Common myeloid progenitor, CD34-positive (primary cell): ENCODE measurements at regions of chr11 and their contacts with region 1.

Region 1: DNA sequence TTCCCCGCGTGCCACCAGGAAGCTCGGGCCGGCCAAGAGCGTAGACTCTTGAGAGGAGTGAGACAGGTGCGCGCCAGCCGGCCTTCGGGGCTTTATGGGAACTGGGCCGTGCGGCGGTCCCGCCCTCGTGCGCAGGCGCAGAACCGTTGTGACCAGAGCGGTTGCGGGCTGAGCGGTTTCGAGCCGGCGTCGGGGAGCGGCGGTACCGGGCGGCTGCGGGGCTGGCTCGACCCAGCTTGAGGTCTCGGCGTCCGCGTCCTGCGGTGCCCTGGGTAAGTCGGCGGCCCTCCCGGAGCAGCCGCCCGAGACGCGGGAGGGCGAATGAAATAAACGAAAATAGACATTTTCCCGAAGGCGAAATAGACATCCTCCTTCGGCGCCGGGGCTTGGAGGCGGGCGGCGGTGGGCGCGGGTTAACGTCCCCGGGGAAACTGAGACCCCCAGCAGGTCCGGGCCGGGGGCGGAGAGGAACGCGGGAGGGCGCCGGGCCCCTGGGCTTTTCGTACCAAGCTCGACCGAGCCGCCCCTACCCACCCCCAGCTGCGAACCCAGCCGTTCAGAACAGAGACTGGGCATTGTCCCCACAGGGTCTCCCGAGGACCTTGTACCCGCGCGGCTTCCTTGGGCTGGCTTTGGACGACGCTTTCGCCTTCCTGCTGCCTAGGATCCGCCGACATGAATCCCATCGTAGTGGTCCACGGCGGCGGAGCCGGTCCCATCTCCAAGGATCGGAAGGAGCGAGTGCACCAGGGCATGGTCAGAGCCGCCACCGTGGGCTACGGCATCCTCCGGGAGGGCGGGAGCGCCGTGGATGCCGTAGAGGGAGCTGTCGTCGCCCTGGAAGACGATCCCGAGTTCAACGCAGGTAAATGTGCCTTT is at the start of gene ASRGL1:
- DNase-seq: peak; percentile 59 to 72 (median 71)
- H3K4me3 ChIP-seq: peak within 1 kb of the TSS; percentile 61 to 85 (median 77)
- H3K27ac ChIP-seq: no peak within 1 kb of the TSS
- H3K4me1 ChIP-seq: peaks cover 3 to 17% (median 13%) of the 10 kb centered on the region in 4 experiments
- H3K27me3 ChIP-seq: peaks cover 0 to 5% (median 0%) of the 10 kb centered on the region in 5 experiments

Region 2: GRCh38 chr11:62256281-62256680 is 81.3 kb before region 1 on chr11:
- CTCF ChIA-PET with region 1: no interaction called
- POLR2A ChIA-PET with region 1: no interaction called
- DNase-seq: no peak
- H3K4me3 ChIP-seq: no peak overlapping the region
- H3K27ac ChIP-seq: no peak overlapping the region
- H3K4me1 ChIP-seq: no peaks in the 10 kb centered on the region
- H3K27me3 ChIP-seq: peaks cover 0 to 3% (median 0%) of the 10 kb centered on the region in 5 experiments

Region 3: DNA sequence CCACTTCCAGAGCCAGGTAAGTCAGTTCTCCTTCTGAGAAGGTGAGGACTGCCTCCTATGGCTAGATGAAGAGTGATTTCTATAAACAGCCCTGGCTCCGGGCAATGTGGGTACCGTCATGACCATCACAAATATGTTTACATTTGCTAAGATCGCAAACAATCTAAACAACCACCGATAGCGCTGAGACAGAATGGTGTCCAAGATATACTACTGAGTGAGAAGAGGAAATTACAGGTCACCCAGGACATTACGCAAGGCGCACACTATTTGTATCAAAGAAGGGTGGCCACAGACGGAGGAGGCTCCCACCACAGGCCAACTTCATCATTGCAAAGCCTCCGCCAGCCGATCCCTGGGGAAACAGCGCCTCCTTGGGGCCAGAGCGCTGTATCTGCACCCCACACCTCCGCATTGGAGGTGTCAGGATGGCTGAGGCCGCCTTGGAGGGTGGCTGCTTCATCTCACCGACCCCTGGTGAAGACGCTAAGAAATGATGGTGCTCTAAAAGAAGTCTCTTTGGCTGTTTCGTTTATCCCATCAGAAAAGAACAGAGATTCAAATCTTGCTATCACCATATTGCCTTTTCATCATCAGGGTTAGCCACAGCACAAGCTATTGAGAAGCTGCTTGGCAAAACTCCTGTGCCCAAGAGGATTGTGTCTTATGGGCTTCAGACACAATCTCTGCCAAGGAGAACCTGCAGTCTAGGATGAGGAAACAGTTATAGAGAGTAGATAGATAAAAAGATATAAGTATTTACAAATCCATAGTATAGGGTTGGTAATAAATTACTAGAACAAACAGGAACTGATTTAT is 12.6 kb before region 1 on chr11:
- CTCF ChIA-PET with region 1: interaction called, 19 read pairs
- POLR2A ChIA-PET with region 1: no interaction called
- DNase-seq: peak; percentile 73 to 84 (median 82)
- H3K4me3 ChIP-seq: no peak overlapping the region
- H3K27ac ChIP-seq: no peak overlapping the region
- H3K4me1 ChIP-seq: peaks cover 0 to 2% (median 0%) of the 10 kb centered on the region in 4 experiments
- H3K27me3 ChIP-seq: peaks cover 0 to 3% (median 0%) of the 10 kb centered on the region in 5 experiments

Region 4: DNA sequence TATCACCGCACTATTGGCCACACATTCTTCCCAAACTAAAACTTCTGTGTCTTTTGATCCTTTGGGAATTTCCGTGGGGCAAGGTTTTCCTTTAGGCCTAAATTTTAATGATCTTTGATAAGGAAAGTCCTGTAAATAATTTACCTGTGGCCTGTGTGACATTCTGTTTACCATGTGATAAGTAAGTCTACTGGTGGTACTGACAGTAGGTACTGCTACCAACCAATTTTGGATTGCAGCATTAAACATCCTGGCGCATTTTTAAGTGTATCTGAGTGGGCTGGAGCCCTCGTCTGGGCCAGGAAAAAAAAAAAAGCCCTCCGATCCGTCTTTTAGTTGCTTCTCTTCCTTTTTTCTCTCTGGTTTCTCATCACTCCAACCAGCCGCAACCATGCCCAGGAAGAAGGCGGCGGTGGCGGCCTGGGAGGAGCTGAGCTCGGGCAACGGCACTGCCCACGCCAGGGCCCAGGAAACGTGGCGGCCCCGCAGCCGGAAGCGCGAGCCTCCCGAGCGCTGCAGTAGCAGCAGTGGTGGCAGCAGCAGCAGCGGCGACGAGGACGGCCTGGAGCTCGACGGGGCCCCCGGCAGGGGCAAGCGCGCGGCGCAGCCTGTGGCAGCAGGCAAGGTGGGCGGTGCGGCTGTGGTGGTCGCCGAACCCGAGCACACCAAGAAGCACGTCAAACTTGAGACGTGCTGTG is 33.4 kb after region 1 on chr11:
- CTCF ChIA-PET with region 1: interaction called, 109 read pairs
- POLR2A ChIA-PET with region 1: interaction called, 4 read pairs
- DNase-seq: peak; percentile 14 to 61 (median 56)
- H3K4me3 ChIP-seq: peak overlapping the region in 4 of 7 experiments; percentile 27 to 60 (median 44)
- H3K27ac ChIP-seq: no peak overlapping the region
- H3K4me1 ChIP-seq: peaks cover 0 to 4% (median 0%) of the 10 kb centered on the region in 4 experiments
- H3K27me3 ChIP-seq: no peaks in the 10 kb centered on the region

Region 5: DNA sequence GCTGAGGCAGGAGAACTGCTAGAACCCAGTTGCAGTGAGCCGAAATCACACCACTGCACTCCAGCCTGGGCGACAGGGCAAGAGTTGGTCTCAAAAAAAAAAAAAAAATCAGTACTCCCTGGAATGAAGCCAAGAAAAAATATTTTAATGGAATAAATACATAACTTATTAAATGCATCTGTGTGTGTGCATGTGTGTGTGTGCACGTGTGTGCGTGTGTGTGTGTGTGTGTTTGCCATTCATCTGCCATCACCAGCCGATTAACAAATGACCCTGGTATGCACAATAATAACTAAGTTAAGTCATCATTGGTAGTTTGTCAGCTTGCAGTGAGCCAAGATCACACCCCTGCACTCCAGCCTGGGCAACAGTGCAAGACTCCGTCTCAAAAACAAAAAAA is 46.3 kb after region 1 on chr11:
- CTCF ChIA-PET with region 1: interaction called, 13 read pairs
- POLR2A ChIA-PET with region 1: no interaction called
- DNase-seq: no peak
- H3K4me3 ChIP-seq: no peak overlapping the region
- H3K27ac ChIP-seq: no peak overlapping the region
- H3K4me1 ChIP-seq: peaks cover 0 to 4% (median 0%) of the 10 kb centered on the region in 4 experiments
- H3K27me3 ChIP-seq: no peaks in the 10 kb centered on the region

Region 6: GRCh38 chr11:62427630-62428233 is 90.2 kb after region 1 on chr11:
- CTCF ChIA-PET with region 1: no interaction called
- POLR2A ChIA-PET with region 1: no interaction called
- DNase-seq: peak; percentile 43 to 77 (median 57)
- H3K4me3 ChIP-seq: no peak overlapping the region
- H3K27ac ChIP-seq: peak overlapping the region in 1 of 2 experiments; percentile 18
- H3K4me1 ChIP-seq: peaks cover 0 to 43% (median 31%) of the 10 kb centered on the region in 4 experiments
- H3K27me3 ChIP-seq: no peaks in the 10 kb centered on the region